Panc1 (cell line): ENCODE measurements at regions of chr16 and their contacts with region 1.

Region 1: DNA sequence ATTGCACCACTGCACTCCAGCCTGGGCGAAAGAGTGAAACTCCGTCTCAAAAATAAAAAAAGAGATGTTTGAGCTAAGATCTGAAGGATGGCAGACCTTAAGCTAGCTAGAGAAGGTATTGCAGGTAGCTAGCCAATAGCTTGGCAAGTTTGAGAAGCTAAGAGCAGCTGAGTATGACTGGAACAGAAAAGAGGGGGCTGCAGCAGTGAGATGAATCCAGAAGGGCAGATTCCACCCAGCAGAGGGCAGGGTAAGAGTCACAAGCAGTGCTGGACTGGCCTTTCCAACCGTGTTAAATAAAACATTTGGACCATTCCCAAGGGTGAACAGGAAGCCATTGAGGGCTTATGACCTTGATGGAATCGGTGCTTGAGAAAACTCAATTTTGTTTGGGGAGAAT is 5.7 kb upstream of the PHAF1 start:
- DNase-seq: no peak
- ATAC-seq: peak; percentile 79; the same call in 1 of the 2 replicates
- H3K4me3 ChIP-seq: no peak overlapping the region
- H3K27ac ChIP-seq: no peak overlapping the region
- H3K4me1 ChIP-seq: no peaks in the 10 kb centered on the region
- H3K27me3 ChIP-seq: no peaks in the 10 kb centered on the region
- CTCF ChIP-seq: peak; percentile 66; the same call in 1 of the 2 replicates

Region 2: DNA sequence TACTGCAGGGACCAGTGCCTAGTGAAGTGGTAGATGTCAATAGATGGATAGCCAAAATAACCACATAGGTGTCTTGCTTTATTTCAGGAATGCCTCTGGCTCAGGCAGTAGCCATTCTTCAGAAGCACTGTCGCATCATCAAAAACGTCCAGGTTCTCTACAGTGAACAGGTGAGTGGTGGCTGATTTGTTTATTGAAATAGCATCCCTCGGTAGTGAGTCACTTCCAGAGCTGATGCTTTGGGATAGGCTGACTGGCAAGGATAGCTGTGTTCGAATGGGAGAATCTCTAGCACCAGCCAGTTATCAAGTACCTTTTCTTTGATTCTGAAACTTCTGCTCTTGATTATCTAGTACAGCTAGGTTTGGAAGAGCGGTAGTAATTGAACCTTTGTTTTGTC is 16.0 kb after region 1 on chr16:
- CTCF ChIA-PET with region 1: interaction called, 5 read pairs
- POLR2A ChIA-PET with region 1: interaction called, 7 read pairs
- in situ Hi-C with region 1: no loop called
- intact Hi-C with region 1: loop called (anchors 1 kb)
- DNase-seq: no peak
- ATAC-seq: no peak
- H3K4me3 ChIP-seq: no peak overlapping the region
- H3K27ac ChIP-seq: no peak overlapping the region
- H3K4me1 ChIP-seq: no peaks in the 10 kb centered on the region
- H3K27me3 ChIP-seq: no peaks in the 10 kb centered on the region
- CTCF ChIP-seq: no peak

Region 3: GRCh38 chr16:67226804-67227557 is 122.9 kb after region 1 on chr16 and contains the start of gene TMEM208:
- CTCF ChIA-PET with region 1: no interaction called
- POLR2A ChIA-PET with region 1: interaction called, 13 read pairs
- in situ Hi-C with region 1: no loop called
- intact Hi-C with region 1: no loop called
- DNase-seq: peak; percentile 84
- ATAC-seq: peak; percentile 96
- H3K4me3 ChIP-seq: peak within 1 kb of the TSS; percentile 67 to 99
- H3K27ac ChIP-seq: peak within 1 kb of the TSS; percentile 88
- H3K4me1 ChIP-seq: peaks cover 4% of the 10 kb centered on the region; the same call in 1 of the 2 replicates
- H3K27me3 ChIP-seq: no peaks in the 10 kb centered on the region
- CTCF ChIP-seq: no peak; the same call in 1 of the 2 replicates
- total RNA-seq, gene TMEM208: 25.6 TPM